Endothelial cell of umbilical vein (primary cell): ENCODE measurements at regions of chr12 and their contacts with region 1.

Region 1: DNA sequence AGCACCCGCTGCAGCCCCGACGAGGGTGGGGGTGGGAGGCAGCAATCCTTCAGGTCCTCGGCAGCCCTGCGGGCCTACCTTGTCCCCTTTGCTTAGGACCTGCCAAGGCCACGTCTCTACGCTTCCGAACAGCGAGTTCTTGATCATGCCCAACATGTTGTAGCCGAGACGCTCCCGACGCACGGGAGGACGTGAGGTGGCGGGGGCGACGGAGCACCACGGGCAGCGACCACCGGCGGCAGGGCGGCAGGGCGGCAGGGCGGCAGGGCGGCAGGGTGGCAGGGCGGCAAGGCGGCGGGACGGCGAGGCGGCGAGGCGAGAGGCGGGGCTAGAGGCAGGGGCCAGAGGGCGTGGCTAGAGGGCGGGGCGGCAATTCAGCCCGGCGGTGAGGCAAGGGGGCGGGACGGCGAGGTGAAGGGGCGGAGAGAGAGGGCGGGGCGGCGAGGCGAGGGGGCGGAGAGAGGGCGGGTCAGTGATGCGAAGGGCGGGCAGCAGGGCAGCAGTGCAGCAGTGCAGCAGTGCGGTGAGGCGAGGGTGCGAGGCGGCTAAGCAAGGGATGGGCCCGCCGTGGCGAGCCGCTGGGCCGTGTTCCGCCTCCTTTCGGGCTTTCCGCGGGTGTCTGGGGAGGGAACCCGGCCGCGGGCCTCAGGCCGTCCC is at the start of gene HEBP1:
- DNase-seq: peak; percentile 89
- H3K4me3 ChIP-seq: peak within 1 kb of the TSS; percentile 55 to 87 (median 85)
- H3K27ac ChIP-seq: peak within 1 kb of the TSS; percentile 71
- H3K4me1 ChIP-seq: peaks cover 22% of the 10 kb centered on the region
- H3K27me3 ChIP-seq: no peaks in the 10 kb centered on the region
- CTCF ChIP-seq: no peak
- POLR2A ChIP-seq: peak; percentile 91
- total RNA-seq, gene HEBP1: 44.8 and 59.5 TPM in 2 replicates

Region 2: DNA sequence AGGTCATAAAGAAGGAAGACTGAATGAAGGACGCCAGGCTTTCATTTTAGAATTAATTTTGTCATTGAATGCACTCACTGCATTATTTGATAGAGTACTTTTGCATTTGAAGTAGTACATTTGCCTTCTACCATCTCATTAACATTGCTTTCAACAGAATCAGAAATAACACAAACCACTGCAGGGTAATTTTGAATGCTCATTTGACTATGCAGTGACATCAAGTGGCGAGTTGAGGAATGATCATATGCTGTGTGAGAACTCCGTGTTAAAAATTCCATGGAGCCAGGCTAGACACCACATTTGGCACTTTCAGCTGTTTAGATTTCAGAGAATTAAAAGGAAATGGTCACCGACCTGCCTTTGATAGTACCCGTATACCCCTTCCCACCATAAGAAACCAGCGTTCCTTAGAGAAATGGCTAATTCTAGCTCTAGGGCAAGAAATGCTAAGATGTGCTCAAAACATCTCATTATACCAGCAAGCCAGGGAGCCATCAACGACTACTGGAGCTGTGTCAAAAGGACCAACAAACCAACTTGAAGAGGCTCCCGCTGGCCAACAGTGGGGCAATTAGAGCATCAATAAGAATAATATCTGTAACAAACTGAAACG is 16.6 kb before region 1 on chr12:
- CTCF ChIA-PET with region 1: interaction called, 23 read pairs
- POLR2A ChIA-PET with region 1: interaction called, 3 read pairs
- dilution Hi-C with region 1: no loop called
- intact Hi-C with region 1: no loop called
- DNase-seq: peak; percentile 78
- H3K4me3 ChIP-seq: no peak overlapping the region
- H3K27ac ChIP-seq: peak overlapping the region; percentile 25
- H3K4me1 ChIP-seq: peaks cover 20% of the 10 kb centered on the region
- H3K27me3 ChIP-seq: no peaks in the 10 kb centered on the region
- CTCF ChIP-seq: peak; percentile 56 to 60
- POLR2A ChIP-seq: no peak

Region 3: GRCh38 chr12:13044002-13044905 is 44.2 kb after region 1 on chr12 and contains the start of gene FAM234B:
- CTCF ChIA-PET with region 1: no interaction called
- POLR2A ChIA-PET with region 1: no interaction called
- dilution Hi-C with region 1: no loop called
- intact Hi-C with region 1: loop called (anchors 1 kb)
- DNase-seq: peak; percentile 70
- H3K4me3 ChIP-seq: peak within 1 kb of the TSS; percentile 66 to 85 (median 79)
- H3K27ac ChIP-seq: no peak within 1 kb of the TSS
- H3K4me1 ChIP-seq: peaks cover 10% of the 10 kb centered on the region
- H3K27me3 ChIP-seq: peaks cover 2% of the 10 kb centered on the region in 2 experiments
- CTCF ChIP-seq: peak; percentile 9 to 21
- POLR2A ChIP-seq: no peak
- total RNA-seq, gene FAM234B: 9.4 and 13.2 TPM in 2 replicates

Region 4: DNA sequence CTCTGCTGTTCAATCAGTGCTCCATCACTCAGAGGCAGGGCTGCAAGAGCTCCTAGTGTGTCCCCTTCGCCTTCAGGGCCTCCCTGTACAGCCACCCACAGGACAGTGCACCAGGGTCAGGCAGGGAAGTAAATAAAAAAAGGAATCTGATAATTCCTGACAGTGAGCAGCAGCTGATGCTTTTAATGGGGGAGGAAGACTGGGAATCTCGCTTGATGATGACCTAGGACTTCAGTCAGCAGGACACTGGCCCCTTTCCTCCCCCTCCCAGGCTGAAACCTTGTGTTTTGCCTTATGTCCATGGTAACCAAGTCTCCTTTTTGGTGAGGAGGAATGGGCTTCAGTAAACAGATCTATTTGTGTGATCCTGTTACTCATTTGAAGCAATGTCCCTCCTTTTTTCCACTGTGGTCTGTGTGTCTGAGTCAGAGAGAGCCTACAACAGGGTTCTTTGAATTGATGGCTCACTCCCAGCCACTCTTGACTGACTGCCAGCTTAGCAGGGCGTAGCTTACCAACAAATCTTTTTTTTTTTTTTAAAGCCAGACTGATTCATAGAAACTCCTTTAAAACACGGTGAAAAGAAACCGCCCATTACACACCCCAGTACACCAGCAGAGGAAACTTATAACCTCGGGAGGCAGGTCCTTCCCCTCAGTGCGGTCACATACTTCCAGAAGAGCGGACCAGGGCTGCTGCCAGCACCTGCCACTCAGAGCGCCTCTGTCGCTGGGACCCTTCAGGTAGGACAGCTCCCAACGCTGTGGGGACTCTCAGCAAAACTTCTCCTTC is 196.2 kb after region 1 on chr12 and contains the start of gene EMP1:
- CTCF ChIA-PET with region 1: no interaction called
- POLR2A ChIA-PET with region 1: no interaction called
- dilution Hi-C with region 1: no loop called
- intact Hi-C with region 1: loop called (anchors 2 kb)
- DNase-seq: peak; percentile 99
- H3K4me3 ChIP-seq: peak within 1 kb of the TSS; percentile 85 to 99 (median 95)
- H3K27ac ChIP-seq: peak within 1 kb of the TSS; percentile 96
- H3K4me1 ChIP-seq: peaks cover 35% of the 10 kb centered on the region
- H3K27me3 ChIP-seq: no peaks in the 10 kb centered on the region
- CTCF ChIP-seq: no peak
- POLR2A ChIP-seq: peak; percentile 99
- total RNA-seq, gene EMP1: 528 and 577 TPM in 2 replicates

Region 5: DNA sequence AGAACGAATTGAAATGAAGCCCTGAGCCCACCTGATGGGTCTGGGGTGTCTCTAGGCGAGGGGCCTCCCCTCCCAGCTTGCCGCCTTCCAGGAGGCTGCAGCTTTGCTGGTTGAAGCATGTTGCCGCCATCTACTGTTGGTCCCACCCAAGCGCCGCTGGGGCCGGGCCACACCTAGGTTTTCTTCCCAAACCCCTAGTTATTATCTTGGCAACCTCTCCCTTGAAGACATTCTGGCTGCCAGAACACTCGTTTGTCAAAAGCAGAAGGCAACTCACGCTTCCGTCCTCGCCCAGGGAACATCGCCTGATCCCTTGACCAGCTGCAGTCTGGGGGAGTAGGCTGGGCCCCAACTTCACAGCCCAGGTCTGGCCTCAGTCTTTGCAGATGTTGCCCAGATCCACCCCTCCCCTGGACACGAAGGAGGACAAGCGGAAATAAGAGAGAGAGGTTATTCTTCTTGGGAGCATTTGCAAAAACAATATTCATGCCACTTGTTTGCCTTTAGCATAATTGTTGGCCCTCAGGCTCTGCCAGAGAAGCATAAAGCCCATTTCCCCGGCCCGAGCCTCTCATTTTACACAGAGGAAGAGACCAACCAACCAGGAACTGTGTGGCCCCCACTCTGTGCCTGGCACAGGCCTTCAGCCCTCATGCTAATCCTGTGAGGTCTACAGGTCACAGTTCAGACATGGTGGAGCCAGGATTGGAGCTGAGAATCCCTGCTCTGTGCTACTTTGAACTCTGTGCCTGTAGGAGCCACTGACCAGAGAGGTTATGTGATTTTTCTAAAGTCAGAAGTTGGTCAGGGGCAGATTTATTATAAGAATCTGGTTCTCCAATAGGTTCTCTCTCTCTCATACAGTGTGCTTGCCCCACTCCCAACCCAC is 203.2 kb after region 1 on chr12:
- CTCF ChIA-PET with region 1: interaction called, 3 read pairs
- POLR2A ChIA-PET with region 1: no interaction called
- dilution Hi-C with region 1: no loop called
- intact Hi-C with region 1: loop called (anchors 1 kb)
- DNase-seq: peak; percentile 46
- H3K4me3 ChIP-seq: no peak overlapping the region
- H3K27ac ChIP-seq: peak overlapping the region; percentile 97
- H3K4me1 ChIP-seq: peaks cover 90% of the 10 kb centered on the region
- H3K27me3 ChIP-seq: no peaks in the 10 kb centered on the region
- CTCF ChIP-seq: peak; percentile 28 to 46
- POLR2A ChIP-seq: no peak

Region 6: DNA sequence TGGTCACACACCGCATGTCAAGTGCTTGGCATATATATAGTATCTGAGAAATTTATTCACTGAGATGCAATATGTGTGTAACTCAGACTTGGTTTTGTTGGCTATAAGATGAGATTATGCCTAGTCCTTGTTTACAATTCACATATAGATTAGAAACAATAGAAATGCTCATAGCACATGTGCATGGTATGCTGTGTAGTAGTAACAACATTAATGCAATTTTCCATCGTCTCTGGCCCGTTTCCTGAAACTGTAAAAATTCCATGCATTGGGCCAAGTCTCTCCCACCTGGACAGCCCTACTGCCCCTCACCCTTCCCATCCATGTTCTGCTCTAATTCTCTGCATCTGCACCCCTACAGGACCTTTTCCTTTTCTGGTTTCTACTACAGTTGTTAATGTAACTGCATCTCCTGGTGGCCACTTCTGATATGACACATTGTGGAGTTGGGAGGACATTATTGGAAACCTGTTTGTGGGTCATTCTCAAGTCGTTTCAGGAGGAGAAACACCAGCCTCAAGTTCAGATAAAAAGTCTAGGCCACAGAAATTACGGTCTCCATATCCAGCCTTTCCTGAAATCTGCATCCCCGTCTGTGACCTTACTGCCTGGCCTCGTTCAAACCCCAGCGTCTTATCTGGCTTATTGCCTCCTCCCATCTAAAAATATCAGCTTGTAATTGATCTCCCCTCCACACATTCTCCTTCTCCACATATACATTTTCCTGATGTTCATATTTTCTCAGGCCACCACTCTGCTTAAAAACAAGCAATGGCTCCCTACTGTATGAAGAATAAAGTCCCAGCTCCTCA is 233.9 kb after region 1 on chr12:
- CTCF ChIA-PET with region 1: interaction called, 3 read pairs
- POLR2A ChIA-PET with region 1: no interaction called
- dilution Hi-C with region 1: no loop called
- intact Hi-C with region 1: loop called (anchors 1 kb)
- DNase-seq: peak; percentile 77
- H3K4me3 ChIP-seq: no peak overlapping the region
- H3K27ac ChIP-seq: no peak overlapping the region
- H3K4me1 ChIP-seq: peaks cover 3% of the 10 kb centered on the region
- H3K27me3 ChIP-seq: no peaks in the 10 kb centered on the region
- CTCF ChIP-seq: peak; percentile 70 to 83
- POLR2A ChIP-seq: no peak